H1 (cell line): ENCODE measurements at regions of chr22 and their contacts with region 1.

Region 1: DNA sequence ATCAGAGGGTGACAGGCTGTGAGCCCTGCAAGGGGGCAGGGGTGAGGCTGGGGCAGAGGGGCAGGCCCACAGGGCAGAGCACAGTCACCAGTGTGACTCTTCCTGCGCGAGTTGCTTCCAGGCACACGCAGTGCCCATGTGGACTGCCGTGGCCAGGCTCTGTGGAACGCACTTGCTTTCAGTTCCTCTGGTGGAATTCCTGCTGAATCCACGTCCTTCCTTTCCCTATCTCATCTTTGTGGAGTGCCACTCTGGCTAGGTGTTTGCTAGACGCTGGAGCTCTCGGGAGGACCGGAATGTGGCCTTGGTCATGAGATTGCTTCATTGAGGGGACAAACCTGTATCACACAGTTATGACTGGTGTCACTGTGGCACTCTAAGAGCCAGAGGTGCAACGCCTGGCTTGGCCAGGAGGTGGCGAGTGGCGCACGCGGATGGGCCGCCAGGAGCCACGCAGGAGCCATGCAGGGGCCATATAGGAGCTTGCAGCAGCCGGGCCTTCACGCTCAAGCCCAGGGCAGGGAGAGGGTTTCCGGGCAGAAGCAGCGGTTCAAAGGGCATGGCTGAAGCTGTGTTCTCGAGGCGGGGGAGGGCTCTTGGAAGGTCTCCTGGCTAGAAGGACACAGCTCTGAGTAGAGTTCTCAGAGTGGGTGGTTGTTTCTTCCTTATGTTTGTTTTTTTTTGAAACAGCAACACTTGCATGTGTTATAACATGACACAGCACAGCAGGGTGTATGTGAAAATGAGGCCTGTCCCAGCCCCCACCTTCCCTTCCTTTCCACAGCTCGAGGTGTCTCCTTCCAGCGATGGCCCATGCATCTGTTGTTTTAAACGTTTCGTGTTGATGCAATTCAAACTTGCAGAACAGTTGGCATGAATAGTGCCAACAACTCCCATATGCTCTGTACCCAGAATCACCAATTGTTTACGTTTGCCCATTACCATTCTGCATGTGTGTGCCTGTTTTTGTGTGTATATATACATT is 36.2 kb downstream of the TBC1D22A start:
- DNase-seq: peak; percentile 70 to 94
- H3K4me3 ChIP-seq: no peak overlapping the region
- H3K27ac ChIP-seq: no peak overlapping the region
- H3K4me1 ChIP-seq: no peaks in the 10 kb centered on the region; a peak in 2 of 7 replicates
- H3K27me3 ChIP-seq: no peaks in the 10 kb centered on the region
- CTCF ChIP-seq: peak; percentile 92 to 96 (median 96)
- EP300 ChIP-seq: no peak
- POLR2A ChIP-seq: no peak
- RAD21 ChIP-seq: peak; percentile 81 to 86

Region 2: GRCh38 chr22:46303347-46303965 is 495.2 kb before region 1 on chr22:
- CTCF ChIA-PET with region 1: no interaction called
- POLR2A ChIA-PET with region 1: no interaction called
- DNase-seq: no peak
- H3K4me3 ChIP-seq: no peak overlapping the region
- H3K27ac ChIP-seq: no peak overlapping the region
- H3K4me1 ChIP-seq: no peaks in the 10 kb centered on the region
- H3K27me3 ChIP-seq: no peaks in the 10 kb centered on the region
- CTCF ChIP-seq: no peak
- EP300 ChIP-seq: no peak
- POLR2A ChIP-seq: no peak
- RAD21 ChIP-seq: no peak

Region 3: GRCh38 chr22:46638601-46639431 is 159.8 kb before region 1 on chr22:
- CTCF ChIA-PET with region 1: no interaction called
- POLR2A ChIA-PET with region 1: no interaction called
- DNase-seq: no peak
- H3K4me3 ChIP-seq: no peak overlapping the region
- H3K27ac ChIP-seq: no peak overlapping the region
- H3K4me1 ChIP-seq: peaks cover 0 to 7% (median 2%) of the 10 kb centered on the region in 4 experiments; a peak in 3 of 7 replicates
- H3K27me3 ChIP-seq: no peaks in the 10 kb centered on the region
- CTCF ChIP-seq: no peak
- EP300 ChIP-seq: no peak
- POLR2A ChIP-seq: no peak
- RAD21 ChIP-seq: no peak

Region 4: GRCh38 chr22:46774253-46774979 is 24.2 kb before region 1 on chr22:
- CTCF ChIA-PET with region 1: interaction called, 15 read pairs
- POLR2A ChIA-PET with region 1: interaction called, 4 read pairs
- DNase-seq: no peak
- H3K4me3 ChIP-seq: no peak overlapping the region; a peak in 1 of 8 replicates
- H3K27ac ChIP-seq: peak overlapping the region; percentile 27
- H3K4me1 ChIP-seq: peaks cover 0 to 13% (median 7%) of the 10 kb centered on the region in 4 experiments; a peak in 6 of 7 replicates
- H3K27me3 ChIP-seq: no peaks in the 10 kb centered on the region
- CTCF ChIP-seq: no peak
- EP300 ChIP-seq: no peak
- POLR2A ChIP-seq: no peak
- RAD21 ChIP-seq: no peak

Region 5: DNA sequence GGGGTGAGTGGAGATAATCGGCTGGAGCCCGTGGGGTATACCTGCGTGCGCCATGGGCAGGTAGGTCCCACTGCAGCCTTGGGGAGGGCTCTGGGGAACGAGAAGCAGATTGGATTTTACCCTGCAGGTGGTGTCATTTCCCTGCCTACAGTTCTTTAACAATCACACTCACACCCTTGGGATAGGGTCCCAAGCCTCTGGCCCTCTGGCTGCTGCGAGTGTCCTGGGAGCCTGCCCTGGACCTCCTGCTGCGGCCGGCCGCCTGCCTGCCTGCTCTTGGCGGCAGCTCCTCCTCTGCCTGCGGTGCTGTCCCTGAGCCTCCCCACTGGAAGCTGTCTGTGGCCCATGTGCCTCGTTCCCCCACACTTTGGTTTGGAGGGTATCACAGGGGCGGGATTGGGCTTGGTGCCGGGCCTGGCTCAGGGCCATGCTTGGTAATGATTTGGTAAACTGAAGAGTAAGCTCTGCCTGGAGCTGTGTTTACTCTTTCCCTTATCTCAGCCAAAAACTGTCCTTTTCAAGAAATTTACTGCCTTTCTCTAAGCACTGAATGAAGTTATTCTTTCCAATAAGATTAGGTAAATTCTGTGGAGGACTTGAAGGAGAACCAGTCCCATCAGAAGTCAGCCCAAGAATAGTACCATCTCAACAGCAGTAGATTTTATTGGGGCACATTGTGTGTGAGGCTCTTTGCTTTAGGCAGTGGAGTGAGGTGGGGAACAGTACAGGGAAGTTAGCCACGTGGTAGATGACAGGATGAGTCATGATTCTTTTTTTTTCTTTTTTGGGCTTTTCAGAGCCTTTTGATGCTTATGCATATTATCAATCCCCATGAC is 17.5 kb after region 1 on chr22:
- CTCF ChIA-PET with region 1: interaction called, 32 read pairs
- POLR2A ChIA-PET with region 1: no interaction called
- DNase-seq: peak in 1 of 2 experiments; percentile 45
- H3K4me3 ChIP-seq: no peak overlapping the region
- H3K27ac ChIP-seq: 0 out of 2 replicates have a peak overlapping the region, but pooled peaks have one; percentile 12
- H3K4me1 ChIP-seq: peaks cover 0 to 2% (median under 1%) of the 10 kb centered on the region in 4 experiments; a peak in 1 of 7 replicates
- H3K27me3 ChIP-seq: no peaks in the 10 kb centered on the region
- CTCF ChIP-seq: no peak
- EP300 ChIP-seq: no peak
- POLR2A ChIP-seq: no peak
- RAD21 ChIP-seq: no peak

Region 6: DNA sequence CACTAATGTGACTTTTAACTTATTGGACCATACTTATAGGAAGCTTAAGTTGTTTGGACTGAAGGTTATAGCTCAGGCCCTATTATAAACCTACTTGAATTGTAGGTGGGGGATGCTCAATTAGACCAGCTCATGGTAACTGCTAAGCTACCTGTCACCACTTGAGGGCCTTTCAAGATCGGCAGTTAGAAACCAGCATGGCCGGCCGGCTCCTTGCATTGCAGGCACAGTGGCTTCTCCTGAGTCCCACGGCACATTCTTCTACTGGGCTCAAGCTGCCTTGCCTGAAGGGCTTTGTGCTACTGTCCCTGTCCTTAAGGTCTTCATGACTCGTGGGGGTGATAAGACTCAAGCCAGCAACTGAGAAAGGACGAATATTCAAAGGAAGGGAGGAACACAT is 34.6 kb after region 1 on chr22:
- CTCF ChIA-PET with region 1: interaction called, 12 read pairs
- POLR2A ChIA-PET with region 1: no interaction called
- DNase-seq: peak; percentile 39 to 63
- H3K4me3 ChIP-seq: no peak overlapping the region
- H3K27ac ChIP-seq: no peak overlapping the region
- H3K4me1 ChIP-seq: peaks cover 0 to 8% (median 3%) of the 10 kb centered on the region in 4 experiments; a peak in 3 of 7 replicates
- H3K27me3 ChIP-seq: no peaks in the 10 kb centered on the region
- CTCF ChIP-seq: peak; percentile 44 to 73 (median 69)
- EP300 ChIP-seq: no peak
- POLR2A ChIP-seq: no peak
- RAD21 ChIP-seq: peak; percentile 70 to 78

Region 7: DNA sequence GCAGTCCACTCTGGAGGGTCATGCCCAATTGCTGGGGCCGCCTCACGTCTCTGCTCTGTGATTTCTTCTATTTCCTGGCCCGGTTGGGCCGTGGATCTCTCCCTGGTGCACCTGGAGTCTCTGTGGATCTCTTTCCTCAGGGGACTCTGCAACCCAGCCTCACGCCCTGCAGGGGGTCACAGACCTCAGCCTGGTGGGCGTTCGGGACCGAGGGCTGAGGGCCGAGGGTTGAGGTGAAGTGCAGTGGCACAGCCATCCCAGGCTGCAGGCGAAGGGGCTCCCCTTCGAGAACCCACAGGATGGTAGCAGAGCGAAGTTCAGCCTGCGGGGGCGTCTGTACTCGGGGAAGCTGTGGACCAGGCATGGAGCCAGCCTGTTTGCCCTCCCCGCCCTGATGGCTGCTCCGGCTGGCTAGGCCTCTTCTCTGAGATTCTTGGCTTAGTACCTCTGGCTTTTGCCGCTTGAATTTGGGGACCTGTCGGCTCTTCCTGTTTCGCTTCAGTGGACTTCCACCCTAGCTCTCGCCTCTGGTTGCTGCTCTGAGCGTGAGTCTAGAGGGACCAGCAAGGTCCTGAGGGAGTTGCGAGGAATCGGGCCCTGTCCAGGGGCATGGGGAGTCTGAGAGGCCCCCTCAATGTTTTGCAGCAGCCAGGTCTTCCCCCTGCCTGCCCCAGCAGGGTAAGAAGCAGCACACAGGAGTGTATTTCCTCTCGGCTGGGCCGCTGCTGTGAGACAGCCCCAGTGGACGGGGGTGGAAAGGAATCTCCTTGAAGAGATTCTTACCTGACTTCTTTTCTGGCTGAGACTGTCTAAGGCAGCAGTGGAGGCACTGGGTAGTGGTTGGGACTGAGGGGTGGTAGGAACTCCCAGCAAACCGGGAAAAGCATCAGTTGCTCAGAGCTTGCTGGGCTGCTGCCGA is 104.6 kb after region 1 on chr22:
- CTCF ChIA-PET with region 1: no interaction called
- POLR2A ChIA-PET with region 1: no interaction called
- DNase-seq: peak in 1 of 2 experiments; percentile 69
- H3K4me3 ChIP-seq: no peak overlapping the region
- H3K27ac ChIP-seq: no peak overlapping the region
- H3K4me1 ChIP-seq: peaks cover 0 to 2% (median under 1%) of the 10 kb centered on the region in 4 experiments; a peak in 3 of 7 replicates
- H3K27me3 ChIP-seq: no peaks in the 10 kb centered on the region
- CTCF ChIP-seq: peak; percentile 46 to 68 (median 61)
- EP300 ChIP-seq: no peak
- POLR2A ChIP-seq: no peak
- RAD21 ChIP-seq: peak; percentile 45 to 53

Region 8: GRCh38 chr22:46941968-46942798 is 143.5 kb after region 1 on chr22:
- CTCF ChIA-PET with region 1: no interaction called
- POLR2A ChIA-PET with region 1: no interaction called
- DNase-seq: peak in 1 of 2 experiments; percentile 27
- H3K4me3 ChIP-seq: no peak overlapping the region
- H3K27ac ChIP-seq: no peak overlapping the region
- H3K4me1 ChIP-seq: no peaks in the 10 kb centered on the region; a peak in 1 of 7 replicates
- H3K27me3 ChIP-seq: no peaks in the 10 kb centered on the region
- CTCF ChIP-seq: no peak
- EP300 ChIP-seq: no peak
- POLR2A ChIP-seq: no peak
- RAD21 ChIP-seq: no peak